CD8-positive, alpha-beta T cell (primary cell): ENCODE measurements at regions of chr11 and their contacts with region 1.

Region 1: GRCh38 chr11:126268708-126269579 is at the starts of genes FOXRED1 and SRPRA:
- DNase-seq: peak; percentile 99 to 100 (median 100)
- ATAC-seq: peak; percentile 99
- H3K4me3 ChIP-seq: peak within 1 kb of the TSS; percentile 90 to 98
- H3K4me3 Mint-ChIP-seq: peak within 1 kb of the TSS; percentile 96
- H3K27ac ChIP-seq: peak within 1 kb of the TSS; percentile 90 to 94
- H3K27ac Mint-ChIP-seq: peak within 1 kb of the TSS; percentile 98
- H3K4me1 ChIP-seq: peaks cover 24% of the 10 kb centered on the region
- H3K4me1 Mint-ChIP-seq: peaks cover 39% of the 10 kb centered on the region
- H3K27me3 ChIP-seq: no peaks in the 10 kb centered on the region
- H3K27me3 Mint-ChIP-seq: no peaks in the 10 kb centered on the region
- CTCF ChIP-seq: no peak
- total RNA-seq, gene FOXRED1: 27.4 to 30.5 TPM
- total RNA-seq, gene SRPRA: 234 to 242 TPM

Region 2: DNA sequence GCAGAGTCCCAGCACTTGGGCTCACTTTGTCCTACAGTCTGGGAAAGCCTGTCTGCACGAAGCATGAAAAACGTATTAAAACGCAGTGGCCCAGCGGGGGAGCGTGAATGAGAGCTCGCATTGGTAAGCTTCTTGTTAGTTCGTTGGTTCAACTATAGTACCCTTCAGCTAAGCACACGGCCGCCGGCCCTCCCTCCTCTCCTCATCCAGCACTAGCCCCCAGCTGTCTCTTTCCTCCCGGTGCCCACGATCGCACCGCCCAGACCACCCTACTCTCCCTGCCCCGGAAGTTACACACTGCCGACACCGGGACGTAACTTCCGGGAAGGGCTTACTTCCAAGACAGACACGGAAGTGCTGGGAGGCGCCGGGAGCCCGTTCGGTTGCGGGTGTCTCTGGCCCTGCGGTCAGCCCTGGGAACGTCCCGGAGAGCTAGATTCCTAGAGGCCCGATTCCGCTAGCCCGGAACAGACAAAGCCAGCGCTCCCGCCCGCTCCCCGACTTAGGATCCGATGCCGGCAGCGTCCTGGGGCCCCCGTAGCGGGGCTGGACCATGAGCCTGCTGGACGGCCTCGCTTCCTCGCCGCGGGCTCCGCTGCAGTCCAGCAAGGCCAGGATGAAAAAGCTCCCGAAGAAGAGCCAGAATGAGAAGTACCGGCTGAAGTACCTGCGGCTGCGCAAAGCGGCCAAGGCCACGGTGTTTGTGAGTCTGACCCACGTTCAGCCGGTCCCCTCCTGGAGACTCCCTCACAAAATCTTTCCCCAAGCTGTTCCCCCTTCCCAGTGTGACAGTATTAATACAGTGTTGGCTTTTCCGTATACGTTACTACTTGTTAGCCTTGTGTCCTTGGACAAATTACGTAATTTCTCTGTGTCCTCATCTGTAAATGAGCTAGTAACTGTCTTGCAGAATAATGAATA is 1646.2 kb before region 1 on chr11 and contains the start of gene TBRG1:
- CTCF ChIA-PET with region 1: no interaction called
- POLR2A ChIA-PET with region 1: no interaction called
- intact Hi-C with region 1: loop called in 1 of 2 experiments (anchors 5 kb)
- DNase-seq: peak; percentile 62 to 95 (median 84)
- ATAC-seq: peak; percentile 97
- H3K4me3 ChIP-seq: peak within 1 kb of the TSS; percentile 94 to 100
- H3K4me3 Mint-ChIP-seq: peak within 1 kb of the TSS; percentile 97
- H3K27ac ChIP-seq: peak within 1 kb of the TSS; percentile 95 to 97
- H3K27ac Mint-ChIP-seq: peak within 1 kb of the TSS; percentile 99
- H3K4me1 ChIP-seq: peaks cover 16% of the 10 kb centered on the region
- H3K4me1 Mint-ChIP-seq: peaks cover 43% of the 10 kb centered on the region
- H3K27me3 ChIP-seq: no peaks in the 10 kb centered on the region
- H3K27me3 Mint-ChIP-seq: peaks cover 6% of the 10 kb centered on the region
- CTCF ChIP-seq: no peak
- total RNA-seq, gene TBRG1: 59.2 to 61.0 TPM

Region 3: DNA sequence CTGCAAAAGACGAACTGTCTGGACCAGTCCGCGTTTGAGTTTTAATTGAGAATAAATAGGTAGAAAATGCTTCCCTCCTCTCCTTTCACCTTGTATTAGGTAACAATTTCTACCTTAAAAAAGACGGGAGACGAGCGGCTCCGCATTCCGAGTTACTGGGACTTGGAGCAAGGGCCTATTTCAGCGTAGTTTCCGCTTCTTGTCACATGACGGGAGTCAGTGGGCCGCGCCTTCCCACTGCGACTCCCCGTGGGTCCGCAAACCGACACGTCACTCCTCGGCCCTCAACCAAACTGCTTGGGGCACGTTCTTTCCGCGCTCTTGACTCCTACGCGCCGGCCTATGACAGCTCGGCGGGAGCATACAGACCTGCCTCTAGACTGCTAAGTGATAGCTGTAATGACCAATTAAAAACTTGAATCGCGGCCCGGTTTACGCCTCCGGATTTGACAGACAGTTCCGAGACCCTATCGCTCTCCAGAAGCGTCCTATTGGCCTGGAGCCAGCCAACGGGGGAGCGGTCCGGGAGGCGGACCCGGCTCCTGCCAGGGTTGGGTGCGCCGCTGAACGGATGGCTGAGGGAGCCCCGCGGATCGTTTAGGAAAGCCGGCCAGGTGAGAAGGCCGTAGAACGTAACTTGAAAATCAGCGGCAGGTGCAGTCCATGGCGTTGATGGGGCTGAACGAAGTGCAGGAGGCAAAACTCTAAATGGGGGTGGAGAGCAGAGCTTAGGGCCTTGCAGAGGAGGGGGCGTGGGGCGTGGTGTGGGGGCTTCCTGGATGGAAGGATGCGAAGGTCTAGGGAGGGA is 676.4 kb before region 1 on chr11 and contains the start of gene STT3A:
- CTCF ChIA-PET with region 1: no interaction called
- POLR2A ChIA-PET with region 1: no interaction called
- intact Hi-C with region 1: loop called (anchors 1 to 10 kb)
- DNase-seq: peak; percentile 96 to 99 (median 98)
- ATAC-seq: peak; percentile 91
- H3K4me3 ChIP-seq: peak within 1 kb of the TSS; percentile 90 to 97
- H3K4me3 Mint-ChIP-seq: peak within 1 kb of the TSS; percentile 92
- H3K27ac ChIP-seq: peak within 1 kb of the TSS; percentile 88 to 96
- H3K27ac Mint-ChIP-seq: peak within 1 kb of the TSS; percentile 98
- H3K4me1 ChIP-seq: peaks cover 15% of the 10 kb centered on the region
- H3K4me1 Mint-ChIP-seq: peaks cover 43% of the 10 kb centered on the region
- H3K27me3 ChIP-seq: no peaks in the 10 kb centered on the region
- H3K27me3 Mint-ChIP-seq: no peaks in the 10 kb centered on the region
- CTCF ChIP-seq: no peak
- total RNA-seq, gene STT3A: 45.5 to 46.8 TPM

Region 4: DNA sequence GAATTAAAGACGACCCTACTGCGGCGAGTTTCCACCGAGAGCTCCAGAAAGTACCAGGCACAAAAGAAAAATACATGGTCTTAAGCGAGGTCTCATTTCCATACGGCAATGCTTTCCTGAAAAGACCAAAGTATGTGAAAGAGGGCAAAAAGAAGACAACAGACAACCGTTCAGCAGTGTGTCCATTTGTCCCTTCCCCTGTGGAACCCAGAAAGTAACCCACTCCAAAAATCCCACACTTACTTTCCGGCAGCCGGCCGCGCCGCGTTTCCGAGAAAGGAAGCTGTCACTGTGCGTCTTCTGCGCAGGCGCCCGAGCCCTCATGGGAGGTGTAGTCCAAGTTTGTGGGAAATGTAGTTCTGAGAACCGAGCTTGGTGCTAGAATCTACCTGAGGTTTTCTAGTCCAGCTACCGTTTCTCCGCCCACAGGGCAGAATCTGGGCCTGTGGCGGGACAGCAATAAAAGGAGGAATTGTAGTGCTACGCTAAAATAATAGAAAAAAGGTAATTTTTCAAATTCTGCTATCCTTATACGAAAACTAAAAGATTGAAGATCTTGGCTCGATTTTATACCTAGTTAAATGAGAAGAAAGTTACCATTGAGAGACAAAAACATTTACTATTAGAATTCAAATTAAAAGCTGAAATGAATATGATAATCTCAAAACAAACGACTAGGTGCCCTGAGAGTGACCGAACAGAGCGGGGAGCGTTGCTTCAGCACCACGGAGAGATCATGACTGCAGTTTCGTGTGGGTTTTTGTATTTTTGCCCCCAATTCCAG is 365.8 kb before region 1 on chr11 and contains the start of gene PUS3:
- CTCF ChIA-PET with region 1: no interaction called
- POLR2A ChIA-PET with region 1: no interaction called
- intact Hi-C with region 1: loop called (anchors 2 to 5 kb)
- DNase-seq: peak; percentile 67 to 91 (median 87)
- ATAC-seq: peak; percentile 92
- H3K4me3 ChIP-seq: peak within 1 kb of the TSS; percentile 58 to 77
- H3K4me3 Mint-ChIP-seq: peak within 1 kb of the TSS; percentile 95
- H3K27ac ChIP-seq: peak within 1 kb of the TSS; percentile 48 to 67
- H3K27ac Mint-ChIP-seq: peak within 1 kb of the TSS; percentile 91
- H3K4me1 ChIP-seq: peaks cover 16% of the 10 kb centered on the region
- H3K4me1 Mint-ChIP-seq: peaks cover 41% of the 10 kb centered on the region
- H3K27me3 ChIP-seq: peaks cover 5 to 7% of the 10 kb centered on the region in 2 experiments
- H3K27me3 Mint-ChIP-seq: peaks cover 19% of the 10 kb centered on the region
- CTCF ChIP-seq: no peak
- total RNA-seq, gene PUS3: 4.5 to 5.2 TPM

Region 5: DNA sequence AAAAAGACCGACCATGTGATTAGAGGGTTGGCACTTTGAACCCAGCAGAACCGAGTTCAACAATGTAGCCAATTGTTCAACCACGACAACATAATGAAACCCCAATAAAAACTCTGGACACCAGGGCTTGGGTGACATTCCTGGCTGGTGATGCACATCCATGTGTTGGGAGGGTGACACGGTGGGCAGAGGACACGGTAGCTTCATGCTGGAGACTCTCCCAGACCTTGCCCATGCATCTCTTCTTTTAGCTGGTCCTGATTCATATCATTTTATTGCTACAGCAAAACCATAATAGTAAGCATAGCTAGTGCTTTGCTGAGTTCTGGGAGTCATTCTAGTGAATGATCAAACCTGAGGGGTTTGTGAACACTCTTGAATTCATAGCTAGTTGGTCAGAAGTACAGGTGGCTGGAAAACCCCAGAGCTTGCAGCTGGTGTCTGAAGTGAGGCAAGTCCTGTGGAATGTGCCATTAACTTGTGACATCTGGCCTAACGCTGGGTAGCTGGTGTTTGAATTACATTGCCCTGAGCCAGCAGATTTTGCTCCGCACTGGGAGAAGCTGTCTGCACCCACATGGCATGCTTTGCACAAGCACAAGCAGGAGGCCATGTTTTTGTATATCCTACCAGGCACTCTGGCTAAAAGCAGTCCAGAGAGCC is 71.5 kb before region 1 on chr11:
- CTCF ChIA-PET with region 1: no interaction called
- POLR2A ChIA-PET with region 1: no interaction called
- intact Hi-C with region 1: no loop called
- DNase-seq: no peak
- ATAC-seq: no peak
- H3K4me3 ChIP-seq: no peak overlapping the region
- H3K4me3 Mint-ChIP-seq: no peak overlapping the region
- H3K27ac ChIP-seq: no peak overlapping the region
- H3K27ac Mint-ChIP-seq: no peak overlapping the region
- H3K4me1 ChIP-seq: no peaks in the 10 kb centered on the region
- H3K4me1 Mint-ChIP-seq: no peaks in the 10 kb centered on the region
- H3K27me3 ChIP-seq: no peaks in the 10 kb centered on the region
- H3K27me3 Mint-ChIP-seq: no peaks in the 10 kb centered on the region
- CTCF ChIP-seq: no peak

Region 6: GRCh38 chr11:126282736-126283591 is 14.0 kb after region 1 on chr11 and contains the start of gene TIRAP:
- CTCF ChIA-PET with region 1: interaction called, 9 read pairs
- POLR2A ChIA-PET with region 1: interaction called, 52 read pairs
- intact Hi-C with region 1: loop called (anchors 1 kb)
- DNase-seq: peak; percentile 28 to 83 (median 65)
- ATAC-seq: peak; percentile 60
- H3K4me3 ChIP-seq: peak within 1 kb of the TSS; percentile 88 to 99
- H3K4me3 Mint-ChIP-seq: peak within 1 kb of the TSS; percentile 88
- H3K27ac ChIP-seq: peak within 1 kb of the TSS; percentile 78 to 87
- H3K27ac Mint-ChIP-seq: peak within 1 kb of the TSS; percentile 98
- H3K4me1 ChIP-seq: peaks cover 34% of the 10 kb centered on the region
- H3K4me1 Mint-ChIP-seq: peaks cover 48% of the 10 kb centered on the region
- H3K27me3 ChIP-seq: no peaks in the 10 kb centered on the region
- H3K27me3 Mint-ChIP-seq: no peaks in the 10 kb centered on the region
- CTCF ChIP-seq: no peak
- total RNA-seq, gene TIRAP: 6.7 to 7.9 TPM